A673 (cell line): ENCODE measurements at regions of chr16 and their contacts with region 1.

Region 1: GRCh38 chr16:69859105-69859989 is 91.8 kb upstream of the CLEC18A start:
- DNase-seq: peak; percentile 66
- H3K4me3 ChIP-seq: no peak overlapping the region
- H3K27ac ChIP-seq: no peak overlapping the region
- H3K4me1 ChIP-seq: no peaks in the 10 kb centered on the region
- H3K27me3 ChIP-seq: no peaks in the 10 kb centered on the region
- CTCF ChIP-seq: peak; percentile 52

Region 2: DNA sequence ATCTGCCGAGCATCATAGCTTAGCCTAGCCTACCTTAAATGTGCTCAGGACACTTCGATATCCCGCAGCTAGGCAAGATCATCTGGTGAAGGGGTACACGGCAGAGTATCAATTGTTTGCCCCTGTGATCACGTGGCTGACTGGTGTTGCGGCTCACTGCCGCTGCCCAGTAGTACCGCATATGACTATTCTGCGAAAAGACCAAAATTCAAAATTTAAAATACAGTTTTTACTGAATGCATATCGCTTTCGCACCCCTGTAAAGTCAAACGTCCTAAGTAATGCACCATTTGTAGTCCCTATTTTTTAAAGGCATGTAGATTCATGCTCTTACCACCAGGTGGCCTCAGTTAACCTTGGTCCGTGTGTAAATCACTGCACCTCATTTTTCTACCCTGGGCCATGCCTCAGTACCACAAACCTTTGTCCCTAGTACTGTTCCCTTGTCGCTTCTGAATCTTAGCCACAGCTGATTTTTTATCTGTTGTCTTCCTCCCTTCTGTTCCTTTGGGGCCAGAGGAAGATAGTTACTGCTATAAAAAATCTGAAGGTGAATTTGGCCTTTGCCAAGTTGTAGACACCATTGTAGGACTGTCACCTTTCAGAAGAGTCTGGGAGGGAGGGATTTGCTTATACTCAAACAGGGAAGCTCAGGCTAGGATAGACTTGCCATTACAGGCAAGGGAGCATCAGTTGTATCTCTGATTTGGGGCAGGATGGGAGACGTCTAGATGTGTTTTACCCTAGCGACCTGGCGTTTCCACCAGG is 62.8 kb before region 1 on chr16:
- CTCF ChIA-PET with region 1: no interaction called
- POLR2A ChIA-PET with region 1: no interaction called
- intact Hi-C with region 1: loop called (anchors 2 kb)
- DNase-seq: peak; percentile 85
- H3K4me3 ChIP-seq: peak overlapping the region; percentile 16
- H3K27ac ChIP-seq: no peak overlapping the region
- H3K4me1 ChIP-seq: no peaks in the 10 kb centered on the region
- H3K27me3 ChIP-seq: no peaks in the 10 kb centered on the region
- CTCF ChIP-seq: peak; percentile 89

Region 3: DNA sequence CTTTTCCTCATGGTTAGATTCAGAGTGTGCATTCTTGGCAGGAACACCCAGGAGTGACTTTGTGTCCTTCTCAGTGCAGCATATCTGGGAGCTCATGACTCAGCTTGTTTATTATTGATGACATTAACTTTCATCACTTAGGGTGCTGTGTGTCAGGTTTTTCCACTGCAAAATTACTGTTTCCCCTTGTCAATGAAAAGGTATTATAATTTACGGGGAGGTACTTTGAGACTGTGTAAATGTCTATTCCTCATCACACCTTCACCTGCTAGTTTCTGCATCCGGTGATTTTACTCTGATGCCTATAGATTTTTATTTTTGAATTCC is 46.7 kb before region 1 on chr16:
- CTCF ChIA-PET with region 1: no interaction called
- POLR2A ChIA-PET with region 1: interaction called, 19 read pairs
- intact Hi-C with region 1: no loop called
- DNase-seq: no peak
- H3K4me3 ChIP-seq: no peak overlapping the region
- H3K27ac ChIP-seq: no peak overlapping the region
- H3K4me1 ChIP-seq: no peaks in the 10 kb centered on the region
- H3K27me3 ChIP-seq: no peaks in the 10 kb centered on the region
- CTCF ChIP-seq: no peak